ENCODE measurements at regions of chr16 and their contacts with region 1.

Region 1: GRCh38 chr16:66511615-66512500 is 38.1 kb downstream of the TK2 start:
- DNase-seq: peak; percentile 70
- H3K4me3 ChIP-seq: no peak overlapping the region
- H3K27ac ChIP-seq: peak overlapping the region; percentile 86
- H3K4me1 ChIP-seq: peaks cover 58% of the 10 kb centered on the region
- H3K27me3 ChIP-seq: no peaks in the 10 kb centered on the region
- CTCF ChIP-seq: no peak
- POLR2A ChIP-seq: no peak

Region 2: GRCh38 chr16:66474750-66475199 is 37.1 kb before region 1 on chr16:
- CTCF ChIA-PET with region 1: interaction called, 18 read pairs
- POLR2A ChIA-PET with region 1: interaction called, 3 read pairs
- dilution Hi-C with region 1: no loop called
- intact Hi-C with region 1: loop called (anchors 1 kb)
- DNase-seq: peak; percentile 31
- H3K4me3 ChIP-seq: no peak overlapping the region
- H3K27ac ChIP-seq: no peak overlapping the region
- H3K4me1 ChIP-seq: peaks cover 5% of the 10 kb centered on the region
- H3K27me3 ChIP-seq: peaks cover 0 to 8% of the 10 kb centered on the region in 2 experiments
- CTCF ChIP-seq: no peak
- POLR2A ChIP-seq: no peak

Measured in endothelial cell of umbilical vein (primary cell).